ENCODE measurements at regions of chr9 and their contacts with region 1.

Region 1: DNA sequence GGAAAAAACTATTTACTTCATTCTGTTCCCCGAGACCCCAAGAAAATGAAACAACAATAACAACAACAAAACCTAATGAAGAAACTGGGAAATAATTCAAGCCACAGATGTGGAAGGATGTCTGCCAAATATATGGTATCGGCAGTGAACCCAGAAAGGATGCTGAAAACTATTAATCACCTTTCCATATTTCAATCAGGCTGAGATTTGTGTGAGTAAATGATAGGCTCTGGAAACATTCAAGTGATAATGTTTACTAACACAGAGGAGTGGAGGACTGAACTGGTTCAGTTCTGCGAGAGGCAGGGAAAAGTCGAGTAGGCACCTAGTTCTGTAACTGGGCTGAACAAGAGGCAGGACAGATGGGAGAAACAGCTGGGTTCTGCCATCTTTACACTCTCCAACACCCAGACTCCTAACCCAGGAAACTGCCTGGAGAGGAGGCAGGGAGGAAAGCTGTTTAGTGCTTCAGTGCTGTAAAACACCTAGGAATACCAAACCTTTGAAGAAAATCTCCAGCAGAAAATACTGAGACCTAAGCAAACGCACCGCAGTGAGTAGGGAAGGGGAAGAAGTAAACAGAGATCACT is 96.8 kb upstream of the GNA14 start:
- DNase-seq: no peak
- ATAC-seq: no peak
- H3K4me3 Mint-ChIP-seq: no peak overlapping the region
- H3K27ac Mint-ChIP-seq: peak overlapping the region; percentile 69
- H3K4me1 Mint-ChIP-seq: peaks cover 48% of the 10 kb centered on the region
- H3K27me3 Mint-ChIP-seq: no peaks in the 10 kb centered on the region
- CTCF ChIP-seq: no peak

Region 2: GRCh38 chr9:77534376-77535057 is 210.4 kb before region 1 on chr9:
- CTCF ChIA-PET with region 1: no interaction called
- POLR2A ChIA-PET with region 1: no interaction called
- intact Hi-C with region 1: no loop called
- DNase-seq: no peak
- ATAC-seq: no peak
- H3K4me3 Mint-ChIP-seq: no peak overlapping the region
- H3K27ac Mint-ChIP-seq: no peak overlapping the region
- H3K4me1 Mint-ChIP-seq: no peaks in the 10 kb centered on the region
- H3K27me3 Mint-ChIP-seq: peaks cover 1% of the 10 kb centered on the region
- CTCF ChIP-seq: no peak

Region 3: GRCh38 chr9:77714077-77714549 is 30.8 kb before region 1 on chr9:
- CTCF ChIA-PET with region 1: no interaction called
- POLR2A ChIA-PET with region 1: no interaction called
- intact Hi-C with region 1: loop called (anchors 2 kb)
- DNase-seq: no peak
- ATAC-seq: no peak
- H3K4me3 Mint-ChIP-seq: no peak overlapping the region
- H3K27ac Mint-ChIP-seq: no peak overlapping the region
- H3K4me1 Mint-ChIP-seq: peaks cover 17% of the 10 kb centered on the region
- H3K27me3 Mint-ChIP-seq: no peaks in the 10 kb centered on the region
- CTCF ChIP-seq: no peak

Region 4: GRCh38 chr9:77807281-77807683 is 62.3 kb after region 1 on chr9:
- CTCF ChIA-PET with region 1: no interaction called
- POLR2A ChIA-PET with region 1: no interaction called
- intact Hi-C with region 1: no loop called
- DNase-seq: no peak
- ATAC-seq: peak; percentile 69
- H3K4me3 Mint-ChIP-seq: no peak overlapping the region
- H3K27ac Mint-ChIP-seq: peak overlapping the region; percentile 4
- H3K4me1 Mint-ChIP-seq: peaks cover 22% of the 10 kb centered on the region
- H3K27me3 Mint-ChIP-seq: no peaks in the 10 kb centered on the region
- CTCF ChIP-seq: no peak

Measured in activated CD8-positive, alpha-beta T cell treated with anti-CD3 and anti-CD28 coated beads for 36 hours (primary cell).